ENCODE measurements at regions of chr11 and their contacts with region 1.

Region 1: DNA sequence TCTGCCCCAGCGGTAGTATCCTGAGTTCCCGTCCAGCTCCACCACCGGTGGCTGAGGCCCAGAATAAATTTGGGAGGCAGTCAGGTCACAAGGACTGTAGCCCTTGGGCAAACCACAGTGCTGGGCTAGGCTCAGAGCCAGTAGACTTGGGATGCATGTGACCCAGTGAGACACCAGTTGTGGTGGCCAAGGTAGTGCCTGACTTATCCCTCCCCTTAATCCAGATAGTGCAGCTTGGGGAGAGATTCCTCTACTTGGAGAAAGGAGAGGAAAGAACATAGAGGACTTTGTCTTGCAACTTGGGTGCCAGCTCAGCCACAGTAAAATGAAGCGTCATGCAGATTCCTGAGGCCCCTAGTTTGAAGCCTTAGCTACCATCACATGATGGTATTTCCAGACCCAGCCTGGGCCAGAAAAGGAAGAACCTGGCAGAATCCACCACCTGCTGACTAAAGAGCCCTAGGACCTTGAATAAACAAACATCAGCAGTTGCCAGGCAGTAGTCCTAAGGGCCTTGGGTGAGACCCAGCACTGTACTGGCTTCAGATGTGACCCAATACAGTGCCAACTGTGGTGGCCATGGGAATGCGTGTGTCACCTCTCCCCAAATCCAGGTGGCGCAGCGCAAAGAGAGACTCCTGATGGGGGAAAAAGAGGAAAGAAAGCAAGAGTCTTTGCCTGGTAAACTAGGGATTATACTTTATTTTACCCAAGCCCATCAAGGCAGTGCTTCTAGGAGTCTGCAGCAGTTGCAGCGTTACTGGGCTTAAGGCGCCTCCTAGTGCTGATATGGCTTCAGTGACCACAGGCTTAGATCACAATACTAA is 17.0 kb upstream of the DDX10 start:
- DNase-seq: no peak
- ATAC-seq: peak; percentile 98
- H3K4me3 ChIP-seq: no peak overlapping the region
- H3K27ac ChIP-seq: no peak overlapping the region
- H3K4me1 ChIP-seq: no peaks in the 10 kb centered on the region
- H3K27me3 ChIP-seq: no peaks in the 10 kb centered on the region
- CTCF ChIP-seq: peak; percentile 86 to 88 (median 86)
- EP300 ChIP-seq: no peak
- POLR2A ChIP-seq: no peak
- RAD21 ChIP-seq: peak; percentile 99

Region 2: DNA sequence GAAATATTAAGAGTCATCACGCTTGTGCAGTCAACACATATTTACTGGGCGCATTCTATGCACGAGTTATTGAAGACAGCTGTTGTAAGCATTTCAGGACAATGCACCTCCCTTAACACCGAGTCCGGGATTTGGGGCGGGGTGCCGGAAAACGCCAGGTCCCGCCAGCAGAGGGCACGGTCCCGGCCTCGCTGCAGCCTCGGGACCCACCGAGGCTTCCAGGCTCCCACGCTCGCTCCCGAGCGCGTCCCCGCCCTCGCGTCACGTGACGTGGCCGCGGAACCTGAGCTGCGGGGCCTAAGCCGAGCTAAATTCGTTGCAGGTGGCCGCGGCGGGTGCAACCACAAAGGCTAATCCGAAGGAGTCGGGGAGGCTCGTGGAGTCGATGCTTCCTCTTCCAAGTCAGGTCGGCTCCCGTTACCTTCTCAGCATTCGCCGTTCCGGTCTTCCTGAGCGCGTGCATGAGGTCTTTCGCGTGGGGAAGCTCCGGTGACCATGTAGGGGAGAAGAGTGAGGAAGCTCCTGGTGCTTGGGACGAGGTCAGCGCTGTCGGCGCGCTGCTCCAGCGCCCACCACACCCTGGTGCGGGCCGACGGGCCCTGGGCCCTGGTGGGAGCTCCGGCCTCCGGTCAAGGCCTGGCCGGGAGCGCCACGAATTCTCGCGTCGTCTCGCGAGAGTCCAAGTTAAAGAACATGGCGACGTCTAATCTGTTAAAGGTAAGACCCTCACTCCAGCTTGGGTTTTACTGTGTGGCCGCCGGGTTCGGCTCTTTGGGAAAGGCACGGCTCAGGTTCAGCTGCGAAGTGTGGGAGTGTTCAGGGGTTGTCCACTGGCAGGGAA is 639.0 kb before region 1 on chr11 and contains the start of gene CUL5:
- CTCF ChIA-PET with region 1: no interaction called
- POLR2A ChIA-PET with region 1: no interaction called
- RAD21 ChIA-PET with region 1: interaction called, 3 read pairs
- SMC1A ChIA-PET with region 1: interaction called, 4 read pairs
- in situ Hi-C with region 1: loop called (anchors 10 kb)
- intact Hi-C with region 1: loop called (anchors 10 kb)
- DNase-seq: peak; percentile 60
- ATAC-seq: peak; percentile 89
- H3K4me3 ChIP-seq: peak within 1 kb of the TSS; percentile 80
- H3K27ac ChIP-seq: peak within 1 kb of the TSS; percentile 80
- H3K4me1 ChIP-seq: no peaks in the 10 kb centered on the region
- H3K27me3 ChIP-seq: no peaks in the 10 kb centered on the region
- CTCF ChIP-seq: peak; percentile 86 to 93 (median 90)
- EP300 ChIP-seq: no peak; a peak in 1 of 4 replicates
- POLR2A ChIP-seq: peak; percentile 94
- RAD21 ChIP-seq: peak; percentile 54
- polyA plus RNA-seq, gene CUL5: 9.1 to 11.8 TPM

Region 3: GRCh38 chr11:108340970-108341369 is 306.9 kb before region 1 on chr11:
- CTCF ChIA-PET with region 1: interaction called, 6 read pairs
- POLR2A ChIA-PET with region 1: interaction called, 3 read pairs
- RAD21 ChIA-PET with region 1: interaction called, 7 read pairs
- SMC1A ChIA-PET with region 1: interaction called, 15 read pairs
- in situ Hi-C with region 1: no loop called
- intact Hi-C with region 1: loop called (anchors 5 kb)
- DNase-seq: no peak
- ATAC-seq: no peak; the same call in 2 of the 3 replicates
- H3K4me3 ChIP-seq: no peak overlapping the region
- H3K27ac ChIP-seq: no peak overlapping the region
- H3K4me1 ChIP-seq: no peaks in the 10 kb centered on the region
- H3K27me3 ChIP-seq: no peaks in the 10 kb centered on the region
- CTCF ChIP-seq: no peak
- EP300 ChIP-seq: no peak
- POLR2A ChIP-seq: no peak
- RAD21 ChIP-seq: no peak

Region 4: DNA sequence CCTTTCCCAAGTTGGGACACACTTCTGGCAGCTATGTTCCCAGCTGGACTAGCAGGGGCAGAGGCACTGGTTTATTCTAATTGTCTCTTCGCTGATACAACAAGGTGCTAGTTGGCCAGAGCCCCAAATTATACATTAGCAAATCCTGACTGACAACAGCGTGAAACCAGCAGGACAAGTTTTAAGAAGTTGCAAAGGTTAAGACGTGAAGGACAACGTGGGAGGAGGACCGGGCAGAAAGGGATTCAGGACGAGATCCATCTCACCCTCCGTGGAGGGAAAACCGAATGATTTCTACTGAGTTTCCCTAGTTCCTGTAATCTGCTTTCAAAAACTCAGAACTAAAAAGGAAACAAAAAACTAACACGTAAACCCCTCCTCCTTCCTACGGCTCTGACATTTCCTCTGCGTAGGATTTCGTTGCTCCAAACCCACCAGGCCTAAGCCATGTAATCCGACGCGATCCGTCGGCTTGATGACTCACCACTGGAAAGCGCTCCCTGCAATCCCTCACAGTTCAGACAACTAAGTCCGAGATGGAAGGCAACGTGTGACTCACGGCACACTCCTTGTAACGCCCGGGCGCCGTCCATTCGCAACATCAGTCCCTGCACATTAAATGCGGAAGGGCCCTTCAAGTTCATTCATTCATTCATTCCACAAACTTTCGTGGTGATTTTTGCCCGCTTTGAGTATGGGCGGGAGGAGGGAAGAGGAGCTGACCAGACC is 150.4 kb before region 1 on chr11:
- CTCF ChIA-PET with region 1: interaction called, 7 read pairs
- POLR2A ChIA-PET with region 1: no interaction called
- RAD21 ChIA-PET with region 1: interaction called, 12 read pairs
- SMC1A ChIA-PET with region 1: interaction called, 5 read pairs
- in situ Hi-C with region 1: no loop called
- intact Hi-C with region 1: loop called (anchors 2 kb)
- DNase-seq: peak; percentile 60
- ATAC-seq: peak; percentile 68
- H3K4me3 ChIP-seq: peak overlapping the region; percentile 65
- H3K27ac ChIP-seq: peak overlapping the region; percentile 66
- H3K4me1 ChIP-seq: no peaks in the 10 kb centered on the region
- H3K27me3 ChIP-seq: no peaks in the 10 kb centered on the region
- CTCF ChIP-seq: no peak
- EP300 ChIP-seq: 0 out of 4 replicates have a peak, but pooled peaks of 1 of the 2 experiments have one; percentile 3
- POLR2A ChIP-seq: peak; percentile 83
- RAD21 ChIP-seq: no peak

Region 5: DNA sequence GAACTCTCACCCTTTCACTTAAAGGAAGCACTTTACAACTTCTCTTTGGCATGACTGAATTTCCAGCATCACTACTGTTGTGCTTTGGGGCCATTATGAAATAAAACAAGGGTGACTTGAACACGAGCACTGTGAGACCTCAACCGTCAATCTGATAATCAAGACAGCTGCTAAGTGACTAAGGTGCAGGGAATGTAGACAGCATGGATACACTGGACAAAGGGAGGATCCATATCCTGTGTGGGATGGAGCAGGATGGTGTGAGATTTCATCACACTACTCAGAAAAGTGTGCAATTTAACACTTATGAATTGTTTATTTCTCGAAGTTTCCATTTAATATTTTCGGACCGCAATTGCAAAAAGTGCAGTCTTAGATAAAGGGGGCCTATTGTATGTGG is 38.2 kb before region 1 on chr11:
- CTCF ChIA-PET with region 1: interaction called, 12 read pairs
- POLR2A ChIA-PET with region 1: interaction called, 5 read pairs
- RAD21 ChIA-PET with region 1: interaction called, 3 read pairs
- SMC1A ChIA-PET with region 1: interaction called, 7 read pairs
- in situ Hi-C with region 1: no loop called
- intact Hi-C with region 1: no loop called
- DNase-seq: no peak
- ATAC-seq: no peak
- H3K4me3 ChIP-seq: no peak overlapping the region
- H3K27ac ChIP-seq: no peak overlapping the region
- H3K4me1 ChIP-seq: no peaks in the 10 kb centered on the region
- H3K27me3 ChIP-seq: no peaks in the 10 kb centered on the region
- CTCF ChIP-seq: no peak
- EP300 ChIP-seq: no peak
- POLR2A ChIP-seq: no peak
- RAD21 ChIP-seq: no peak

Region 6: GRCh38 chr11:108664730-108665525 is 17.0 kb after region 1 on chr11 and contains the start of gene DDX10:
- CTCF ChIA-PET with region 1: interaction called, 22 read pairs
- POLR2A ChIA-PET with region 1: no interaction called
- RAD21 ChIA-PET with region 1: interaction called, 4 read pairs
- SMC1A ChIA-PET with region 1: interaction called, 8 read pairs
- in situ Hi-C with region 1: no loop called
- intact Hi-C with region 1: no loop called
- DNase-seq: peak; percentile 92
- ATAC-seq: peak; percentile 84
- H3K4me3 ChIP-seq: peak within 1 kb of the TSS; percentile 94
- H3K27ac ChIP-seq: peak within 1 kb of the TSS; percentile 79
- H3K4me1 ChIP-seq: peaks cover 30% of the 10 kb centered on the region
- H3K27me3 ChIP-seq: no peaks in the 10 kb centered on the region
- CTCF ChIP-seq: no peak; a peak in 1 of 6 replicates
- EP300 ChIP-seq: no peak; a peak in 1 of 4 replicates
- POLR2A ChIP-seq: peak; percentile 75
- RAD21 ChIP-seq: no peak
- polyA plus RNA-seq, gene DDX10: 20.9 to 31.5 TPM